GM12878 (cell line): ENCODE measurements at regions of chr18 and their contacts with region 1.

Region 1: GRCh38 chr18:31819106-31819924 is 58.6 kb upstream of the SLC25A52 start:
- DNase-seq: no peak
- ATAC-seq: peak; percentile 95
- H3K4me3 ChIP-seq: no peak overlapping the region
- H3K27ac ChIP-seq: no peak overlapping the region
- H3K4me1 ChIP-seq: no peaks in the 10 kb centered on the region; the same call in 1 of the 2 replicates
- H3K27me3 ChIP-seq: no peaks in the 10 kb centered on the region
- CTCF ChIP-seq: peak; percentile 57 to 80 (median 64); a peak in 5 of 6 replicates
- EP300 ChIP-seq: no peak
- POLR2A ChIP-seq: no peak
- RAD21 ChIP-seq: peak; percentile 94

Region 2: DNA sequence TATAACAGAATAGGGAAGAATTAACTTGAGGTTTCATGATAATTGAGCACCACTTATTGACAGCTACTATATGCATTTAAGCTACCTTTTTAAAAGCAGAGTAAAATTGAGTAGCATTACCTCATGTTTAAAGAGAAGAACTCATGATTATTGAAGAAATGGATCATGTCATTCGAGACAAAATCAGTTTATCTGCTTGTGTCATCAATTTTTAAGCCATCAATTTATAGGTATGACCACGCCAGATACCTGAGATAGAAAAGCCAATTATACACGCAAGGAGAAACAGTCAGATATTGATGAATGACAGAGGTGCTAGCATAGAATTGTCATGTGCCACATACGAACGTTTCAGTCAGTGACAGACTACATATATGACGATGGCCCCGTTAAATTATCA is 292.9 kb before region 1 on chr18:
- CTCF ChIA-PET with region 1: no interaction called
- POLR2A ChIA-PET with region 1: no interaction called
- RAD21 ChIA-PET with region 1: no interaction called
- SMC1A ChIA-PET with region 1: no interaction called
- in situ Hi-C with region 1: no loop called
- intact Hi-C with region 1: no loop called
- DNase-seq: no peak
- ATAC-seq: no peak
- H3K4me3 ChIP-seq: no peak overlapping the region
- H3K27ac ChIP-seq: no peak overlapping the region
- H3K4me1 ChIP-seq: no peaks in the 10 kb centered on the region
- H3K27me3 ChIP-seq: no peaks in the 10 kb centered on the region
- CTCF ChIP-seq: no peak
- EP300 ChIP-seq: no peak
- POLR2A ChIP-seq: no peak
- RAD21 ChIP-seq: no peak

Region 3: DNA sequence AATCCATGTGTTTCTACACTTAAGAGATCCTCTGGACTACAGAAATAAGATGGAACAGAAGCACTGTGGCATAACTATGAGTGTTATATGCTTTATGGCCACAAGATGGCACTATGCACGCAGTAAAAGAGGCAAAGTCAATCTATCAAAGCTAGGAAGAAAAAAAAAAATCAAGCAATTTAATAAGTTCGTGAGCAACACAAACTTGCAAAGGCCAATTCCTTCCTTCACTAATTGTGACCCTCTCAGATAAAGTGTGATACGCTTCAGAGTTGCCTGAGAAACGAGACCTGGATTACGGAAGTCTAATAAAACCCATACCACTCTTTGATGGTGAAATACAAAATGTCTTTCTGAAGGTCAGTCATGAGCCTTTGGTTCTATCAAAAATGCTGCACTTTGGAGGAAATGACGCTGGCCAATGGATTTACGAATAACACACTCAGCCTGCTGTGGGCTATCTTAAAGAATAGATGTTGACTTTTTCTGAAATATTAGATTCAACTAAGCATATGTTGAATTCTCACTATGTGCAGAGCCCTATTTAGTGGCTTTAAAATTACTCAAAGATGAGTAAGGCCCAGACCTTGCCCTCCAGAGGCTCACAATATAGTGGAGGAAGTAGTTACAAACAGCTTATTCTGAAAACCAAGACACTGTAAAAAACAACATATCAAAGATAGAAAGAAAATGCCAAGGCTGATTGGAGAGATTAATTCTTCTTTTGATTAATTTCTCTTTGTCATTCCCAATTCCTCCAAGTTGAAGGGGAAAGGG is 263.2 kb before region 1 on chr18:
- CTCF ChIA-PET with region 1: interaction called, 25 read pairs
- POLR2A ChIA-PET with region 1: interaction called, 7 read pairs
- RAD21 ChIA-PET with region 1: interaction called, 7 read pairs
- SMC1A ChIA-PET with region 1: interaction called, 9 read pairs
- in situ Hi-C with region 1: loop called (anchors 5 kb)
- intact Hi-C with region 1: loop called (anchors 1 kb)
- DNase-seq: peak; percentile 39
- ATAC-seq: peak; percentile 88
- H3K4me3 ChIP-seq: no peak overlapping the region
- H3K27ac ChIP-seq: no peak overlapping the region
- H3K4me1 ChIP-seq: no peaks in the 10 kb centered on the region
- H3K27me3 ChIP-seq: no peaks in the 10 kb centered on the region
- CTCF ChIP-seq: peak; percentile 62 to 79 (median 72); a peak in 5 of 6 replicates
- EP300 ChIP-seq: no peak
- POLR2A ChIP-seq: no peak
- RAD21 ChIP-seq: peak; percentile 96

Region 4: DNA sequence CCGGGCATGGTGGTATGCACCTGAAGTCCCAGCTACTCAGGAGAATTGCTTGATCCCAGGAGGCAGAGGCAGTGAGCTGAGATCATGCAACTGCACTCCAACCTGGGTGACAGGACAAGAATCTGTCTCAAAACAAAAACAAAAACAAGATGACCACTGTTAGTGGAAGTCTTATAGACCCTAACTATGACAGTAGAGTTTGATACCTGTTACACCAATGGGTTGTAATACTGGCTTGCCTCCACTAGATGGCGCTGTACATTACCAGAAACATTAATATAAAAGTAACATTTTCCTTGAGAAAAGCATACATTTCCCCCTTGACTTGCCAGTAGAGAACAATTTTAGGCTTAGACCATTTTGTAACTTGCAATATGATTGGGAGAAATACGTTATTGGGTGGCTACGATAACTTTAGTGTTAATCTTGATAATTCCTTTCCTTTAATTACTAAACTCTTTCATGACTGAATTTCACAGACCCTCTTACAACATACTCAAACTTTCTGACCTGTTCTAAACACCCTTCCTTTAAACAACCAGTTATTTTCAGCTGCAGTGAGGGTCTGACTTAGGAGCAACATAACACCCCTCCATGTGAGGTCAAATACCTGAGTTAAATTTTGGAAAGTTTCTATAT is 78.1 kb before region 1 on chr18:
- CTCF ChIA-PET with region 1: interaction called, 37 read pairs
- POLR2A ChIA-PET with region 1: no interaction called
- RAD21 ChIA-PET with region 1: interaction called, 14 read pairs
- SMC1A ChIA-PET with region 1: interaction called, 29 read pairs
- in situ Hi-C with region 1: loop called (anchors 5 kb)
- intact Hi-C with region 1: loop called (anchors 1 kb)
- DNase-seq: peak; percentile 16
- ATAC-seq: peak; percentile 72
- H3K4me3 ChIP-seq: no peak overlapping the region
- H3K27ac ChIP-seq: no peak overlapping the region
- H3K4me1 ChIP-seq: no peaks in the 10 kb centered on the region
- H3K27me3 ChIP-seq: no peaks in the 10 kb centered on the region
- CTCF ChIP-seq: peak; percentile 59 to 77 (median 74)
- EP300 ChIP-seq: no peak
- POLR2A ChIP-seq: no peak
- RAD21 ChIP-seq: peak; percentile 72

Region 5: DNA sequence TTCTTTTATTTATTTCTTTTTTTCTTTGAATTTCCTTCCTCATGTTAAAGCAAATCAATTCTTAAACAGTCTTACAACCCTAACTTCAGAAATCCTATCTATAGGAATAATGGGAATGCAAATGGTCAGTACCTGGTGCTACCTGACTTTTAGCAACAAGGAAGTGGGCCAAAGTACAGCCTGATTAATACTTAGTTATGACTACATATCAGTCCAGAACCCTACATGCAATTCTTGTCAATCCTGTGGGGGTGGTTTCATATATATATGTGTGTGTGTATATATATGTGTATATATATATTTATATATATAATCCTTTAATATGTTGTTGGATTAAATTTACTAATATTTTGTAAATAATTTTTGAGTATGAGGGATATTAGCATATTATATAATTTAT is 138.4 kb after region 1 on chr18:
- CTCF ChIA-PET with region 1: no interaction called
- POLR2A ChIA-PET with region 1: no interaction called
- RAD21 ChIA-PET with region 1: interaction called, 3 read pairs
- SMC1A ChIA-PET with region 1: no interaction called
- in situ Hi-C with region 1: no loop called
- intact Hi-C with region 1: loop called (anchors 5 kb)
- DNase-seq: no peak
- ATAC-seq: peak; percentile 49; the same call in 1 of the 3 replicates
- H3K4me3 ChIP-seq: no peak overlapping the region
- H3K27ac ChIP-seq: no peak overlapping the region
- H3K4me1 ChIP-seq: no peaks in the 10 kb centered on the region
- H3K27me3 ChIP-seq: no peaks in the 10 kb centered on the region
- CTCF ChIP-seq: no peak
- EP300 ChIP-seq: no peak
- POLR2A ChIP-seq: no peak
- RAD21 ChIP-seq: no peak

Region 6: DNA sequence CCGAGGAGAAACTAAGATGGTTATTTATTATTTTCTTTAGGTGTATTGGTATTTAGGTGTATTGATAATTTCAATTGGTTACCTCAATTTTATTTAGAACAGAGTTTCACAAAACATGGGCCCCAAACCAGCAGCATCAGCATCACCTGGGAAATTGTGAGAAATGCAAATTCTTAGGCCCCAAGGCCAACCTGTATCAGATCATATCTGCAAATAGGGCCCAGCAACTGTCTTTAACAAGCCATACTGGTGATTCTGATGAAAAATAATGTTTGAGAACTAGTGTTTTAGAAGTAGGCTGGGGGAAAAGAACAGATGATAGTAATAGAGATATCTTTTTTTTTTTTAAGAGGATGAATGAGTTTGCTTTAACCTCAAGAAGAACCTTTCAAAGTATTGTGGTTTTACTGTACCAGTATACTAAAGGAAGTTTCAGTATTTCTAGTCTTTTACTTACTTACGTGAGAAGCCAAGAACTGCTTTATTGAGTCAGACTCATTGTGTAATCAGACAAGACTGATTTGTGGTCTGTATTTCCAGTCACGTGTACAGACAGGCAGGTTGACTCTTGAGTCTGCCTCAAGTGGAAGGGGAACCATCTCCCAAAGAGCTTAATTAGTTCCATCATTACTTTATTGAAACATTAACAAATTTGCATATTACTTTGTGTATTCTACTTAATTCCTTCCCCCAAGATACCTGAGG is 711.8 kb after region 1 on chr18:
- CTCF ChIA-PET with region 1: no interaction called
- POLR2A ChIA-PET with region 1: no interaction called
- RAD21 ChIA-PET with region 1: no interaction called
- SMC1A ChIA-PET with region 1: no interaction called
- in situ Hi-C with region 1: no loop called
- intact Hi-C with region 1: no loop called
- DNase-seq: no peak
- ATAC-seq: peak; percentile 71
- H3K4me3 ChIP-seq: no peak overlapping the region
- H3K27ac ChIP-seq: no peak overlapping the region
- H3K4me1 ChIP-seq: no peaks in the 10 kb centered on the region
- H3K27me3 ChIP-seq: no peaks in the 10 kb centered on the region
- CTCF ChIP-seq: no peak
- EP300 ChIP-seq: no peak
- POLR2A ChIP-seq: no peak
- RAD21 ChIP-seq: no peak